Right cardiac atrium (tissue), 5 donors: ENCODE measurements at regions of chr2 and their contacts with region 1.

Region 1: GRCh38 chr2:226791487-226792081 is 8.0 kb downstream of the IRS1 start:
- DNase-seq: peak; percentile 93 to 97 (median 97)
- ATAC-seq: peak; percentile 94 to 96
- H3K4me3 ChIP-seq: peak overlapping the region; percentile 92
- H3K27ac ChIP-seq: peak overlapping the region; percentile 99
- H3K4me1 ChIP-seq: peaks cover 6% of the 10 kb centered on the region
- H3K27me3 ChIP-seq: no peaks in the 10 kb centered on the region

Region 2: DNA sequence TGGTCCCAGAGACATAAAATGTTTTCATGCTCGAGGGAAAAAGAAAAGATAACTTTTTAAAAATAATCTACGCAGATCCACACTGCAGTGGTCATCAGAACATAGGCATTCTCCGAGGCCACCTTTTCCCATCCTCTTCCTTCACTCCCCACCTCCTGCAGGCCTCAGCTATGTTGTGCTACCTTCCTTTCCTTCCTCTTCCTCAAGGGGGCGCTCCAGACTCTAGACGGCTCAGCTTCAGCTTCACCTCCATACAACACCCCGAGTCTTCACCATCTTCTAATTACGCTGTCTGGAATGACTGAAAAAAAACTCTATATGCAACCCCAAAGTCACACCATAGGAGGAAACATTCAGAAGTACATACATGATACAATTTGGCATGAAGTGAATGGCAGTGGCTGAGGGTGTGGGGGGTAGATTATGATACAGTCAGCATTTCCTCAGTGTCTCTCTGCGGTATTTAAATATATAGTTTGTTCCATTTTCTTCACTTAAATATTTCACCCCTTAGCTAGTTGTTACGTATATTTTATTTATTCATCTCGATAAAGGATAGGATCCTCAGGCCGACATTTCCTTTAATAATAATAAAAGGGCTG is 575.6 kb before region 1 on chr2:
- intact Hi-C with region 1: loop called in 3 of 4 experiments (anchors 5 to 10 kb)
- DNase-seq: peak; percentile 27 to 52 (median 38)
- ATAC-seq: peak; percentile 71 to 86
- H3K4me3 ChIP-seq: no peak overlapping the region
- H3K27ac ChIP-seq: no peak overlapping the region
- H3K4me1 ChIP-seq: no peaks in the 10 kb centered on the region
- H3K27me3 ChIP-seq: no peaks in the 10 kb centered on the region

Region 3: GRCh38 chr2:226387499-226387942 is 404.1 kb before region 1 on chr2:
- intact Hi-C with region 1: no loop called
- DNase-seq: no peak
- ATAC-seq: no peak
- H3K4me3 ChIP-seq: no peak overlapping the region
- H3K27ac ChIP-seq: no peak overlapping the region
- H3K4me1 ChIP-seq: no peaks in the 10 kb centered on the region
- H3K27me3 ChIP-seq: no peaks in the 10 kb centered on the region

Region 4: DNA sequence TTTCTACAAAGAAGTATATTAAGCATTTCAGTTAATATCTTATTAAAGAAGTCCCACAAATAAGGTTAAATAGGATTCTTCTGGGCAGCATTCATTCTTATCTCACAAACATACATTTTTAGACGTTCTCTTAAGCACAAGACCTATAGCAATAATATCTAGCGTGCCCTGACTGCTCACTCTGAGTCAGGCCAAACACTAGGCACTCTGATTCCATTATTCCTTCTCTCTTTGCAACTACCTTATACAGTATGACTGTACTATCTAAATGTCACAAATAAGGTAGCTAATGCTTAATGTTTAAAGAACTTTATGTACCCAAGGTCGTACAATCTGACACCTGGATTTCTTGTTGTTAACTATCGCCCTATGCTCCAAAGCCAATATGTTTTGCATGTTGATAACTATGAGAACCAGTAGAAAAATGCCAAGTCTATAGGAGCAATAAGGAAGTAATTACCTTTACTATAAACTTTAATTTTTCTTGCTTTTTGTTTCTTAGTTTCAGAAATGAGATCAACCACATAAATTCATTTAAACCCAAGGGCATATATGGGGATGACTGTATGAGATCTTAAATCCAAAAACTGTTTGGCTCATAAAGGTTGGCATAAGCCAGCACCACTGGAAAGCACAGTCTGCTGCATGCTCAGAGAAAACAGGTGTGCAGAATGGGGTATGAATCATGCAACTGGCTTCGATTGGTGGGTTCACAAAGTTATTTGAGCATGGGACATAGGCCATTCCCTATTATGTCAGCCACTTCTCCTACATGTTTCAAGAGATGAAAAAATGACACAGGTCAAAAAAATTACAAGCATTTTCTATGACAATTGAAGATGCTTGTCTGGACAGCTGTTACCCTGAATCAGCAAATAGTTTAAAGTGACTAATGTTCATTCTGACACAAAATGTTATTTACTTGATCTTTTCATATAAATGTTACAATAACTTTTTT is 344.0 kb before region 1 on chr2:
- intact Hi-C with region 1: loop called in 1 of 4 experiments (anchors 10 kb)
- DNase-seq: no peak
- ATAC-seq: no peak
- H3K4me3 ChIP-seq: no peak overlapping the region
- H3K27ac ChIP-seq: no peak overlapping the region
- H3K4me1 ChIP-seq: peaks cover 2% of the 10 kb centered on the region
- H3K27me3 ChIP-seq: no peaks in the 10 kb centered on the region

Region 5: GRCh38 chr2:226548732-226549131 is 242.9 kb before region 1 on chr2:
- intact Hi-C with region 1: loop called in 1 of 4 experiments (anchors 10 kb)
- DNase-seq: no peak
- ATAC-seq: no peak
- H3K4me3 ChIP-seq: no peak overlapping the region
- H3K27ac ChIP-seq: no peak overlapping the region
- H3K4me1 ChIP-seq: peaks cover 4% of the 10 kb centered on the region
- H3K27me3 ChIP-seq: no peaks in the 10 kb centered on the region

Region 6: GRCh38 chr2:226649871-226650660 is 141.5 kb before region 1 on chr2:
- intact Hi-C with region 1: loop called in 3 of 4 experiments (anchors 5 to 10 kb)
- DNase-seq: peak; percentile 67 to 82 (median 73)
- ATAC-seq: peak; percentile 94 to 97
- H3K4me3 ChIP-seq: no peak overlapping the region
- H3K27ac ChIP-seq: peak overlapping the region; percentile 91
- H3K4me1 ChIP-seq: peaks cover 9% of the 10 kb centered on the region
- H3K27me3 ChIP-seq: no peaks in the 10 kb centered on the region

Region 7: GRCh38 chr2:226721541-226721940 is 70.0 kb before region 1 on chr2:
- intact Hi-C with region 1: loop called in 1 of 4 experiments (anchors 10 kb)
- DNase-seq: peak; percentile 47 to 83 (median 75)
- ATAC-seq: peak in 1 of 2 donors; percentile 35
- H3K4me3 ChIP-seq: no peak overlapping the region
- H3K27ac ChIP-seq: no peak overlapping the region
- H3K4me1 ChIP-seq: peaks cover 2% of the 10 kb centered on the region
- H3K27me3 ChIP-seq: no peaks in the 10 kb centered on the region

Region 8: GRCh38 chr2:226742347-226742746 is 49.2 kb before region 1 on chr2:
- intact Hi-C with region 1: loop called in 1 of 4 experiments (anchors 10 kb)
- DNase-seq: peak; percentile 52 to 79 (median 62)
- ATAC-seq: peak; percentile 89 to 92
- H3K4me3 ChIP-seq: no peak overlapping the region
- H3K27ac ChIP-seq: peak overlapping the region; percentile 69
- H3K4me1 ChIP-seq: peaks cover 9% of the 10 kb centered on the region
- H3K27me3 ChIP-seq: no peaks in the 10 kb centered on the region